Pancreas (tissue), 10 donors: ENCODE measurements at regions of chr13 and their contacts with region 1.

Region 1: DNA sequence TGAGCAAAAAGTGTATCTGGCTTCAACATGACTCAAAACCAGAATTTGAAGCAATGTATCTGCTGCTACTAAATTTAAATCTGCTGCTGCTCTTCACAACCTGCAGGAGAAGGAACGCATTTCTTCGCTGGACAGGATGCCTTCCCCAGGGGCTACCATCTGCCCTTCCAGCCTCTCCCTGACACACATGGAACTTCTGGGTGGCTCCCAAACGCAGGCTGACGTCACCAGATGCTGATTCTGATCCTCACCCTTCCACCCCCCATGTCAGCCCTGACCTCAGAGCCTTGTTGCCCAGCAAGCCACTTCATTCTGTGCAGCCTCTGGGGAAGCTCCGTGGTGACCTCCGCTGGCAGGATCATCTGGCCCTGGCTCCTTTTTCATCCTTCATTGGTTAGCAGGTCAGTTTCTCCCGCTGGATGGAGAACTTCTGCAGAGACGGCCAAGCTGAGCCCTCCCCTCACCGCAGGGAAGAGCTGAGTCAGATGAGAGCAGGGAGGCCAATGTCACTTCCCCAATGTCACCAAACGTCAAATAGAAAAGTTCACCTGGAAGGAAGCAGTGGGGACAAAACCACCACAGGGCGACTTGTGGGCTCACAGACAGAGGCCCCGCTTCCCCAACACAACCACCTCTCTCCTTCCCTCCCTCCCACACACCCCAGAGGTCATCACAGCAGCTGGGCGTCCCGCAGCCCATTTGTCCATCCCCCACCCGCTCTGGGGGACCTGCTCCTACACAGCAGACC is 14.0 kb upstream of the RAB20 start:
- DNase-seq: peak in 1 of 6 donors; percentile 59
- ATAC-seq: peak in 3 of 4 donors; percentile 24 to 65 (median 45)
- H3K4me3 ChIP-seq: no peak overlapping the region
- H3K27ac ChIP-seq: peak overlapping the region in 1 of 4 donors; percentile 77
- H3K4me1 ChIP-seq: peaks cover 0 to 9% (median 6%) of the 10 kb centered on the region in 3 donors
- H3K27me3 ChIP-seq: no peaks in the 10 kb centered on the region
- CTCF ChIP-seq: no peak

Region 2: DNA sequence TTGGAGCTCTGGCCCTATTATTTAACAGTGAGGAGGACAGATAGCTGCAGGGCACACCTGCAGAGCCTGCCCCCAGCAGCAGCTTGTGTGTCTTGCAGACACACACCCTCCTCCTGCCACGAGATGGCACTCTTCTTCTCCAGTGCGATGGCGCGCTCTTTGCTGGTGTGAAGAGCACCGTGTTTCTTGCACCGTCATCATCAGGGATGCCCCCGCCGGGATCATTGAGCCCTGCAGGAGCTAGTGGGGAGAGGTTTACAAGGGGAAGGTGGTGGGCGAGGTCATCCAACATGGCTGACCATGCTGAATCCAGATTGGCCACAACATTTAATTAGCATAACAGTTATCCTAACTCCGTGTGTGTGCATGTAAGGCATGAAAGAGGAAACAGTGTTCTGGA is 119.6 kb before region 1 on chr13:
- intact Hi-C with region 1: loop called in 1 of 3 experiments (anchors 10 kb)
- DNase-seq: peak; percentile 73 to 91 (median 80)
- ATAC-seq: peak; percentile 97 to 99 (median 98)
- H3K4me3 ChIP-seq: no peak overlapping the region
- H3K27ac ChIP-seq: no peak overlapping the region
- H3K4me1 ChIP-seq: no peaks in the 10 kb centered on the region
- H3K27me3 ChIP-seq: no peaks in the 10 kb centered on the region
- CTCF ChIP-seq: peak; percentile 64 to 89 (median 78)